MCF 10A (cell line): ENCODE measurements at regions of chr17 and their contacts with region 1.

Region 1: DNA sequence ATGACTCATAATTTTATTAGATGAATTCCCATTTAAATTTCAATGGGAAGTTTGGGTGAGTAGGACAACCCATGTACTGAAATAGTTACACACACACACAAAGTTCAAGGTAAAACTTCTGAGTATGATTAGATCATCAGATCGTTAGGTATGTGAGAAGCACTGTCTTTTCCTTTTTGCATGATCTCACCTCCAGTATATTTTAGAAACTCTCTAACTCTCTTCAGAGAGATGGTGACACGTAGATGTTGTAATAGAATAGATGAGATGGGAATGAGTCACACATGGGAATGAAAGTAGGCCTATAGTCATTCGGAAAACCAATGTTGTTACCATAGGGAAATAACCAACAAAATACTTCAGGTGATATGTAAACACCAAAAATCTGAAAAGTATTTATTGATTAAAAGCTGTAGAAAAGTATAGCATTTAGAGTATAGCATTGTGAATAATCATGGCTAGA is 22.2 kb downstream of the KRT23 start:
- DNase-seq: peak; percentile 87
- H3K4me3 Mint-ChIP-seq: no peak overlapping the region
- H3K27ac Mint-ChIP-seq: peak overlapping the region; percentile 98
- H3K4me1 Mint-ChIP-seq: peaks cover 16% of the 10 kb centered on the region
- H3K27me3 Mint-ChIP-seq: no peaks in the 10 kb centered on the region
- CTCF ChIP-seq: no peak

Region 2: GRCh38 chr17:40980596-40980995 is 65.4 kb after region 1 on chr17:
- CTCF ChIA-PET with region 1: no interaction called
- POLR2A ChIA-PET with region 1: no interaction called
- intact Hi-C with region 1: no loop called
- DNase-seq: no peak
- H3K4me3 Mint-ChIP-seq: no peak overlapping the region
- H3K27ac Mint-ChIP-seq: no peak overlapping the region
- H3K4me1 Mint-ChIP-seq: no peaks in the 10 kb centered on the region
- H3K27me3 Mint-ChIP-seq: peaks cover 11% of the 10 kb centered on the region
- CTCF ChIP-seq: no peak

Region 3: GRCh38 chr17:41060052-41060604 is 144.9 kb after region 1 on chr17 and contains the start of gene KRTAP2-3:
- CTCF ChIA-PET with region 1: no interaction called
- POLR2A ChIA-PET with region 1: no interaction called
- intact Hi-C with region 1: loop called (anchors 10 kb)
- DNase-seq: peak; percentile 62
- H3K4me3 Mint-ChIP-seq: no peak within 1 kb of the TSS
- H3K27ac Mint-ChIP-seq: peak within 1 kb of the TSS; percentile 32
- H3K4me1 Mint-ChIP-seq: peaks cover 25% of the 10 kb centered on the region
- H3K27me3 Mint-ChIP-seq: no peaks in the 10 kb centered on the region
- CTCF ChIP-seq: no peak
- total RNA-seq, gene KRTAP2-3: not detected in 2 replicates

Region 4: GRCh38 chr17:41322094-41322902 is 407.1 kb after region 1 on chr17:
- CTCF ChIA-PET with region 1: interaction called, 57 read pairs
- POLR2A ChIA-PET with region 1: interaction called, 19 read pairs
- intact Hi-C with region 1: no loop called
- DNase-seq: peak; percentile 61
- H3K4me3 Mint-ChIP-seq: no peak overlapping the region
- H3K27ac Mint-ChIP-seq: no peak overlapping the region
- H3K4me1 Mint-ChIP-seq: no peaks in the 10 kb centered on the region
- H3K27me3 Mint-ChIP-seq: no peaks in the 10 kb centered on the region
- CTCF ChIP-seq: peak; percentile 76